Psoas muscle (tissue), 8 donors: ENCODE measurements at regions of chr15 and their contacts with region 1.

Region 1: DNA sequence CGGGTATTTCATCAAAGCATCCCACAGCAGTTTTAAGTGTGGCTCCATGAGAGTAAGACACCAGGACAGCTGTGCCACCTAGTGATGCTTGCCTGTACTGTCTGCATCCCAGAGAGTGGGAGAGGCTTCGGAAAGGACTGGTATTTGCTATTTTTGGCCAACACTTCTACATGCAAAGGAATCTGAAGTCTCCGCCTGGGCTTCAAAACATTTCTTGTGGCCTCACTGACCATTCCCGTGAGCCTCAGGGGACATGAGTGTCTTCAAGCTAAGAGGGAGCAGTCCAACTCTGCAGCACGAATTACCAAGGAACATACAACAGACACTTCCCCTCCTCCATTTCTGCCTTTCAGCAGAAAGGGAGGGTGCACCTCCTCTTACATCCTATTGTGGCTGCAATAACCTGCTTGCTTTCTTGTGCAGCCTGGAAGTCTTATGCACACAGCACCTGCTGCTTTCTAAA is 177.5 kb downstream of the RORA start:
- DNase-seq: peak; percentile 34 to 62
- ATAC-seq: peak; percentile 89 to 94 (median 92)
- H3K4me3 ChIP-seq: peak overlapping the region; percentile 22
- H3K27ac ChIP-seq: peak overlapping the region; percentile 38
- H3K4me1 ChIP-seq: peaks cover 20% of the 10 kb centered on the region
- H3K27me3 ChIP-seq: no peaks in the 10 kb centered on the region
- CTCF ChIP-seq: peak; percentile 64

Region 2: GRCh38 chr15:60507596-60508424 is 543.8 kb before region 1 on chr15:
- intact Hi-C with region 1: loop called in 1 of 2 experiments (anchors 10 kb)
- DNase-seq: no peak
- ATAC-seq: peak; percentile 85 to 91 (median 88)
- H3K4me3 ChIP-seq: no peak overlapping the region
- H3K27ac ChIP-seq: peak overlapping the region; percentile 66
- H3K4me1 ChIP-seq: peaks cover 23% of the 10 kb centered on the region
- H3K27me3 ChIP-seq: no peaks in the 10 kb centered on the region
- CTCF ChIP-seq: peak; percentile 97

Region 3: DNA sequence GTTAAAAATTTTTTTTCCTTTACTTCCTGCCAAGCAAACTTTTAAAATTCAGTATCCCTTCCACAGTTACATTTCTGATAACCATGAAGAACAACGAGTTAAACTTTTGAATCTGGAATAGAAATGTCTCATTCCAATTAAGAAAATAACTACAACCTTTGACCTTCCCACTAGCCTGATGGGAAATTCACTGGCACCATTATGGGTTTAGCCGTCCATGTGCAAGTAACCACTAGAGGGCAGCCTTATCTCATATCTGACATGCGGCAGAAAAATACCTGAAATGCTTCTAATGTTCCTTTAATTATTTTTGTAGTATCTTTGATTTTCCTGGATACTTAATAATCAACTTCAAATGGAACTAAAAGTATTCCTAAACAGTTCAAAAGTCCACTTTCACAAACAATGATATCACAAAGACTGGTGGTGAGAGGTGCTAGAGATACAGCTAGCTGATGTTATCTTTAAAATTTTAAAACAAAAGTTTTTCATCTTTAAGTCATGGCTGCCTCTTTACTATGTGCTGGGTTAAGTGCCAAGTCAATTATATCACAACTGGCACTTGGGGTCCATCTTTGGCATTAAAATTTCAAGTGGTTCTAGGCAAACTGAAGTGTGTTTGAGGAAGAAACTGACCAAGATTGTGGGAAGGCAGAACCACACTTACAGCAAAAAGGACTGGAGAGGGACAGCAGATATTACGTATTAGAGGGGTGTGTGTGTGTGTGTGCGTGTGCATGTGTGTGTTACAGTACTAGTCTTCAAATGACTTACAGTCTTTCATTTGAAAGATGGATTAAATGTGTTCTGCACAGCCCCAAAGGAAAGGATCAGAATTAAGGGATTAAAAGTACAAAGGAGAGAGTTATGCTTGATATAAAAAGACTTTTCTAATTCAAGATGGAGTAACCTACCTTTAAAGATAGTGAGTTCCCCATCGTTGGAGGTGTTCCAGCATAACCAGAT is 465.6 kb before region 1 on chr15:
- intact Hi-C with region 1: loop called (anchors 5 to 10 kb)
- DNase-seq: no peak
- ATAC-seq: peak; percentile 71 to 83 (median 76)
- H3K4me3 ChIP-seq: no peak overlapping the region
- H3K27ac ChIP-seq: peak overlapping the region; percentile 31
- H3K4me1 ChIP-seq: peaks cover 75% of the 10 kb centered on the region
- H3K27me3 ChIP-seq: no peaks in the 10 kb centered on the region
- CTCF ChIP-seq: peak; percentile 96

Region 4: GRCh38 chr15:60737217-60737616 is 314.4 kb before region 1 on chr15:
- intact Hi-C with region 1: no loop called
- DNase-seq: no peak
- ATAC-seq: no peak
- H3K4me3 ChIP-seq: no peak overlapping the region
- H3K27ac ChIP-seq: no peak overlapping the region
- H3K4me1 ChIP-seq: peaks cover 5% of the 10 kb centered on the region
- H3K27me3 ChIP-seq: no peaks in the 10 kb centered on the region
- CTCF ChIP-seq: no peak

Region 5: GRCh38 chr15:60932051-60932915 is 119.3 kb before region 1 on chr15:
- intact Hi-C with region 1: loop called in 1 of 2 experiments (anchors 5 kb)
- DNase-seq: peak; percentile 79 to 93
- ATAC-seq: peak; percentile 90 to 98 (median 94)
- H3K4me3 ChIP-seq: no peak overlapping the region
- H3K27ac ChIP-seq: peak overlapping the region; percentile 61
- H3K4me1 ChIP-seq: peaks cover 40% of the 10 kb centered on the region
- H3K27me3 ChIP-seq: no peaks in the 10 kb centered on the region
- CTCF ChIP-seq: peak; percentile 60